SK-N-SH (cell line): ENCODE measurements at regions of chr3 and their contacts with region 1.

Region 1: DNA sequence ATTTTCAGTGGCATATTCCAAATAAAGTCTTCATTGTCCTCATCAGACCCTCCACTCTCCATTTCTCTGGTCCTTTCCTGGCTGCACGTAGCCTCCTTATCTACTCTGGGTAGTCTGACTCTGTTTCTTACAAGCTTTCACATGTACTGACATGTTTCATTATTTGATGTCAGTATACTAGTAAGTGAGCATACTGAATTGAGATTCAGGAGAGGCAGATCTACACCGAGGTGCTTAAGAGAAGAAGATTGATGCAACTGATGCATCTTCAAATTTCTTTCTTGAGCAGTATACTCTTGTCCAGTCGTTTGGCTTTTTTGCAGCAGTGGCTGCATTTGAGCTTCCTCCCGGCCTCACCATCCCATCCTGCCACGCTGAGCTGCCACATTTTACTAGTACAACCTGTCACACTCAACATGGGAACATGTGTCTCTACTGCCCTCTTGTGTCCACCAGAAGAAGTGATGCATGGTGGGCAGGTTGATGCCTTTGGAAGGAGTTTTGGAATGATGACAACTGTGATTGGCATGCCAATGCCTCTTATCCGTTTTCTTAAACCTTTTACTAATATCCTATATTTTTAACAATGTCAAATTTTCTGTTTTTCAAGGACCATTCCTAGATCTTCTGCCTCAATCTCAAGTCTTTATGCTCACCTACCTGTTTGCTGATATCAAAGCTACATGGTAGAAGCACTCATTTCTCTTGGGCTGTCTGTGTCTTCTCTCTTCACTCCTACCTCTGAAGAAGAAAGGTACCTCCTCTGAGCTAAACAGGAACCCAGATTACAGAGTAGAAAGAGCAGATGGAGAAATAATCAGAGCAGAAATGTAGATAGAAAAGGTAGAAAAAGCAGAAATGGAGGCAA is 38.7 kb downstream of the GUCA1C start:
- DNase-seq: peak; percentile 72
- H3K4me3 ChIP-seq: no peak overlapping the region; a peak in 1 of 4 replicates
- H3K27ac ChIP-seq: no peak overlapping the region
- H3K4me1 ChIP-seq: 0 out of 4 replicates have a peak, but pooled peaks cover 0 to 4% of the 10 kb centered on the region in 2 experiments
- H3K27me3 ChIP-seq: no peaks in the 10 kb centered on the region
- CTCF ChIP-seq: peak; percentile 91
- EP300 ChIP-seq: no peak
- RAD21 ChIP-seq: peak; percentile 94

Region 2: GRCh38 chr3:108662130-108662738 is 252.8 kb before region 1 on chr3:
- CTCF ChIA-PET with region 1: interaction called, 199 read pairs
- POLR2A ChIA-PET with region 1: no interaction called
- DNase-seq: peak; percentile 53
- H3K4me3 ChIP-seq: no peak overlapping the region; a peak in 1 of 4 replicates
- H3K27ac ChIP-seq: no peak overlapping the region
- H3K4me1 ChIP-seq: no peaks in the 10 kb centered on the region
- H3K27me3 ChIP-seq: no peaks in the 10 kb centered on the region
- CTCF ChIP-seq: peak; percentile 87
- EP300 ChIP-seq: no peak
- RAD21 ChIP-seq: peak; percentile 92

Region 3: DNA sequence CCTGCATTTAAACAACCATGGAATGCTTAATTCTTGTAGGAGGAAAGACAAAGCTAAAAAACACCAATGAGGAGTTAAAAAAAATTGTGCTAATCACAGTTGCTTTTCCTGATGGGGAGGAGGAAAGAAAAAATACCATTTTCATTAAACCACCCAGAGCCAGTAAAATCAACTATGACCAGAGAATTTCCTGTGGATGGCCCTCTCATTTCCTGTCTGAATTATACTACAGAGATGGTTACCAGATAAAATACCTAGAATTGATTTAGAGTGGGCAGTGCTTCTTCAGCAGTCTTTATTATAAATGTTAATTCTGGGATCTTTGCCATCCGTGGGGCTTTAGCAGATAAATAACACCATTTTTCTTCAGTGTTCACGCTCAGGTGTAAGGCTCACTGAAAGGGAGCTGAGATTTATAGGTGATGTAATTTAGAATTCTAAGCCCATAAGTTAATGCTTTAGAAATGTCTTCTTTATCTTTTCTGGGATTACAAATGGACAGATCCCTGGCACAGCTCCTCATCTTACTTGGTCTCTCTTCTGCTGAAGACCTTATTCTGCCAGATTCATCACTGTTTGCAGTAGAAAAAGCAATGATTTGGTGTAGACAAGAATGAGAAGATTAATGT is 195.7 kb before region 1 on chr3:
- CTCF ChIA-PET with region 1: interaction called, 10 read pairs
- POLR2A ChIA-PET with region 1: no interaction called
- DNase-seq: no peak
- H3K4me3 ChIP-seq: no peak overlapping the region
- H3K27ac ChIP-seq: peak overlapping the region in 1 of 2 experiments; percentile 20; a peak in 2 of 4 replicates
- H3K4me1 ChIP-seq: peaks cover 0 to 15% of the 10 kb centered on the region in 2 experiments; a peak in 2 of 4 replicates
- H3K27me3 ChIP-seq: no peaks in the 10 kb centered on the region
- CTCF ChIP-seq: no peak
- EP300 ChIP-seq: no peak
- RAD21 ChIP-seq: no peak

Region 4: GRCh38 chr3:108780235-108780634 is 134.8 kb before region 1 on chr3:
- CTCF ChIA-PET with region 1: no interaction called
- POLR2A ChIA-PET with region 1: no interaction called
- DNase-seq: no peak
- H3K4me3 ChIP-seq: no peak overlapping the region
- H3K27ac ChIP-seq: no peak overlapping the region
- H3K4me1 ChIP-seq: no peaks in the 10 kb centered on the region
- H3K27me3 ChIP-seq: no peaks in the 10 kb centered on the region
- CTCF ChIP-seq: no peak
- EP300 ChIP-seq: no peak
- RAD21 ChIP-seq: no peak

Region 5: GRCh38 chr3:108838436-108838835 is 76.6 kb before region 1 on chr3:
- CTCF ChIA-PET with region 1: no interaction called
- POLR2A ChIA-PET with region 1: no interaction called
- DNase-seq: no peak
- H3K4me3 ChIP-seq: no peak overlapping the region
- H3K27ac ChIP-seq: no peak overlapping the region
- H3K4me1 ChIP-seq: no peaks in the 10 kb centered on the region
- H3K27me3 ChIP-seq: peaks cover 6% of the 10 kb centered on the region; the same call in 1 of the 2 replicates
- CTCF ChIP-seq: no peak
- EP300 ChIP-seq: no peak
- RAD21 ChIP-seq: no peak

Region 6: DNA sequence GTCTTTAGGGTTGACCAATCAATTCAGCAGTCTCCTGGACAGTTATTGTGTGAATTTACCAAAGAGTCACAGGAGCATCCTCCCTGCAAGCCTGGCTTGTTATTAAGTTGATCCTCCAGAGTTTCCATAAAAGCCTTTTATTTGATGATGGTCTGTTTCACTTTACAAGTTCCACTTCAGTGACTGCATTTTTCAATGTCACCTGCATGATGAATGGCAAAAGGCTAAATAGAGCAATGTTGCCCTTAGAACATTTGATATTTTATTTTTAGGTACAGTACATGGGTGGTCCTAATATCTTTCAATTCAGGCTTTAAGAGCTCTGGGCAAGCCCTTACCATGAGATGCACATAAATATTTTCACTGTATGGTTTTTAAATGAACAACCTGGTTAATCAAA is 16.0 kb after region 1 on chr3:
- CTCF ChIA-PET with region 1: interaction called, 29 read pairs
- POLR2A ChIA-PET with region 1: no interaction called
- DNase-seq: no peak
- H3K4me3 ChIP-seq: no peak overlapping the region
- H3K27ac ChIP-seq: no peak overlapping the region
- H3K4me1 ChIP-seq: no peaks in the 10 kb centered on the region
- H3K27me3 ChIP-seq: no peaks in the 10 kb centered on the region
- CTCF ChIP-seq: no peak
- EP300 ChIP-seq: no peak
- RAD21 ChIP-seq: no peak

Region 7: DNA sequence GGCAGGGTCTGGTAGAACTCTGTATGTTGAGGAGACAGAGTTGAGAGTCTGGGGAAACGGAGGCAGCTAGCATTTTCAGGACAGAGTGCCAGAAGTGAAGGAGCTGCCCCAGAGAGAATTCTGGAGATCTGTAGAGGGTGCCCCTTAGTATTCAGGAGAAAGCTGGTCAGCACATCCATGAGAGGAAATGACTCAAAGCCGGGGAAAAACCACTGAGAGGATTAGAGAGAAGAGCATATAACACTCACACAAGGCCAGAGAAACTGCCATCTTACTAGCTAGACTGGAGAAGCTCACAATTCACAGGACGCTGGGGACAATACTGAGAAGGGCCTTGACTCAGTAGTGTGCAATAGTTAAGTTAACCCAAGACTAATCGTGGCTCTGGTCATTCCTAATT is 498.0 kb after region 1 on chr3:
- CTCF ChIA-PET with region 1: no interaction called
- POLR2A ChIA-PET with region 1: no interaction called
- DNase-seq: no peak
- H3K4me3 ChIP-seq: no peak overlapping the region
- H3K27ac ChIP-seq: no peak overlapping the region
- H3K4me1 ChIP-seq: no peaks in the 10 kb centered on the region
- H3K27me3 ChIP-seq: no peaks in the 10 kb centered on the region
- CTCF ChIP-seq: no peak
- EP300 ChIP-seq: no peak
- RAD21 ChIP-seq: no peak

Region 8: GRCh38 chr3:109553591-109554371 is 638.8 kb after region 1 on chr3:
- CTCF ChIA-PET with region 1: no interaction called
- POLR2A ChIA-PET with region 1: no interaction called
- DNase-seq: no peak
- H3K4me3 ChIP-seq: no peak overlapping the region; a peak in 1 of 4 replicates
- H3K27ac ChIP-seq: peak overlapping the region; percentile 39 to 84
- H3K4me1 ChIP-seq: peaks cover 3 to 22% of the 10 kb centered on the region in 2 experiments
- H3K27me3 ChIP-seq: no peaks in the 10 kb centered on the region
- CTCF ChIP-seq: peak; percentile 49
- EP300 ChIP-seq: peak; percentile 47 to 98
- RAD21 ChIP-seq: 0 out of 2 replicates have a peak, but pooled peaks have one; percentile 36